SK-N-SH (cell line): ENCODE measurements at regions of chr1 and their contacts with region 1.

Region 1: GRCh38 chr1:225474986-225475820 is 47.4 kb upstream of the LBR start:
- DNase-seq: peak; percentile 93
- H3K4me3 ChIP-seq: peak overlapping the region; percentile 17 to 46; a peak in 2 of 4 replicates
- H3K27ac ChIP-seq: no peak overlapping the region
- H3K4me1 ChIP-seq: peaks cover 0 to 6% of the 10 kb centered on the region in 2 experiments; a peak in 2 of 4 replicates
- H3K27me3 ChIP-seq: no peaks in the 10 kb centered on the region
- CTCF ChIP-seq: peak; percentile 100
- EP300 ChIP-seq: no peak
- RAD21 ChIP-seq: peak; percentile 100

Region 2: GRCh38 chr1:225427235-225428067 is 47.8 kb before region 1 on chr1 and contains the start of gene LBR:
- CTCF ChIA-PET with region 1: interaction called, 13 read pairs
- POLR2A ChIA-PET with region 1: no interaction called
- DNase-seq: peak; percentile 85
- H3K4me3 ChIP-seq: peak within 1 kb of the TSS; percentile 74 to 89
- H3K27ac ChIP-seq: peak within 1 kb of the TSS; percentile 72 to 97
- H3K4me1 ChIP-seq: peaks cover 40 to 44% of the 10 kb centered on the region in 2 experiments; a peak in 3 of 4 replicates
- H3K27me3 ChIP-seq: no peaks in the 10 kb centered on the region
- CTCF ChIP-seq: no peak
- EP300 ChIP-seq: no peak
- RAD21 ChIP-seq: no peak
- polyA plus RNA-seq, gene LBR: 10.6 and 11.7 TPM in 2 replicates

Region 3: DNA sequence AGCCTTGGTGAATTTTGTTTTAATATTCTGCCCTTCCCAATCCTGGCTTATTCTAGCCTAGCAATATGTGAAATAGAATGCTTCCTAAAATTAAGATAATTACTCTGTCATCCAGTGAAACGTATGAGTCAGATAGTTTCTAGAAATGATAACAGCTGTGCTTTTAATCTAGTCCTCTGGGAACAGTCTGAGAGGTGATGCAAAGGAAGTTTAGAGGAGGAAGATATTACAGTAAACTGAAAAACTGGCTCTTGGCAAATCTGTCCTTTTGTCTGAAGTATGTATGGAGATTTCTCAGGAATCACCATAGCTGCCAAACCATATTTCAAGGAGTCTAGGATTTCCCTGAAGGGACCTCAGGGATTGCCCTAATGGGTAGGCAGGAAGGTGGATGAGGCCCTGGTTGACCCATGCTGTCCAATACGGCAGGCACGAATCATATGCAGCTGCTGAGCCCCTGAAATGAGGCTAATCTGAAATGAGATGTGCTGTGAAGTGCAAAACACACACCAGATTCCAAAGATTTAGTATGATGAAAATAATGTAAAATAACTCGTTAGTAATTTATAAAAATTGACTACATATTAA is 23.4 kb after region 1 on chr1:
- CTCF ChIA-PET with region 1: interaction called, 11 read pairs
- POLR2A ChIA-PET with region 1: no interaction called
- DNase-seq: no peak
- H3K4me3 ChIP-seq: no peak overlapping the region
- H3K27ac ChIP-seq: peak overlapping the region; percentile 17 to 67
- H3K4me1 ChIP-seq: peaks cover 3 to 8% of the 10 kb centered on the region in 2 experiments
- H3K27me3 ChIP-seq: no peaks in the 10 kb centered on the region
- CTCF ChIP-seq: no peak
- EP300 ChIP-seq: no peak
- RAD21 ChIP-seq: no peak

Region 4: DNA sequence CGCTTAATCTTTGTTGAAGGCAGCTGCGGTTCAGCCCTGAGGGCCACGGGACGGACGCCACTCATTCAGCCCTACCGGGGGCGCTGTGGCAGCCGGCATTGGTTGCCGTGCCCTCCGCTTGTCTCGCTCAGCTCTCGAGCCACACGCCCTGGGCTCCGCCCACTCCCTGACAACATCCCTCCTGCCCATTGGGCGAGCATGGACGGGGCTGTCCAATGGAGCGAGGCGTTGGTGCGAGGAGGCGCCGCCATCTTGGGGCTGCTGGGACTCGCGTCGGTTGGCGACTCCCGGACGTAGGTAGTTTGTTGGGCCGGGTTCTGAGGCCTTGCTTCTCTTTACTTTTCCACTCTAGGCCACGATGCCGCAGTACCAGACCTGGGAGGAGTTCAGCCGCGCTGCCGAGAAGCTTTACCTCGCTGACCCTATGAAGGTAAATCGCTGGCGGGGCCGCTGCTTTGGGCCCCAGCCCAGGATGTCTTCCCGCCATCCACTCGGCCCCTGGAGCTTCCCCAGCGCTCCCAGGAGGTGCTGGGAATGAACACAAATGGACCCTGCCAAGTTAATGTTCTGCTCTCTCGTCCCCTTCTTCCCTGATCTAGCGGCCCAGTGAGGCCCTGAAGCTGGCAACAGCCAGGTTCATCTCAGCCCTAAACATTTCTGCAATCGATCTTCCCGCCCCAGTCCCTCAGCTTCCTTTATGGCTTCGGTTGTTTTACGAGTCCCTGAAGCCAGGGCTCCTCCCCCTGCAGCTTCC is 302.6 kb after region 1 on chr1 and contains the start of gene SRP9:
- CTCF ChIA-PET with region 1: interaction called, 473 read pairs
- POLR2A ChIA-PET with region 1: interaction called, 4 read pairs
- DNase-seq: peak; percentile 95
- H3K4me3 ChIP-seq: peak within 1 kb of the TSS; percentile 81 to 88
- H3K27ac ChIP-seq: peak within 1 kb of the TSS; percentile 95 to 96
- H3K4me1 ChIP-seq: peaks cover 14 to 21% of the 10 kb centered on the region in 2 experiments
- H3K27me3 ChIP-seq: no peaks in the 10 kb centered on the region
- CTCF ChIP-seq: peak; percentile 90
- EP300 ChIP-seq: no peak
- RAD21 ChIP-seq: peak; percentile 66
- polyA plus RNA-seq, gene SRP9: 156 and 292 TPM in 2 replicates

Region 5: DNA sequence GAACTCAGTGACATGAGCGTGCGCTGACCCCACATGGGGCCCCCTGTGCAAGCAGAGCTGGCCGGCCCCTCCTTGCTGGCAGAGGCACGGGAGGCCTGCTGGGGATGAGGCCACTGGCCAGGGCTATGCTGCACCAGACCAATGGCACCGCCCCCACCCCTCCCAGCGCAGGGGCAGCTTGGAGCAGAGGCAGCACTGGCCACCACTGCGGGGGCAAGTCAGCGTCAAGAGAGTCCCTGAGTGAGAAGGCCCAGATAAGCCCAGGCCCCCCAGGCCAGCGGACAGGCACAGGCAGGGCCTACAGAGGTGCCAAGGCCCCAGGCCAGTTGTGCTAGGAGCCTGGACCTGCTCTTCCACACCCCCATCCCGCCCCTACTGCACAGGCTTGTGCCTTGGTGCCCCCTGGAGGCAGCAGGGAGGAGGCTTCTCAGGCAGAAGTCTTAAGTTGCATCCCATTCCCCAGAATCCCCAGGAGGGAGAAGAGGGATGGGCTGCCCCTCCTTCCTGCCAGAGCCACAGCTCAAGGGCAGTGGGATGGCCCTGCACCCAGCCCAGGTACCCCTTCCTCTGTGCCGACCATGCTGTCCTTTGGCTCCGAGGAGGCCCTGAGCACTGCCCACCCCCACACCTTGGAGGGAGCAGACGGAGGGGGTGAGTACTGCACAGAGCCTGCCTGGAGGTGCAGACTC is 370.5 kb after region 1 on chr1:
- CTCF ChIA-PET with region 1: interaction called, 22 read pairs
- POLR2A ChIA-PET with region 1: no interaction called
- DNase-seq: peak; percentile 85
- H3K4me3 ChIP-seq: no peak overlapping the region; a peak in 1 of 4 replicates
- H3K27ac ChIP-seq: no peak overlapping the region
- H3K4me1 ChIP-seq: peaks cover 0 to 11% of the 10 kb centered on the region in 2 experiments; a peak in 1 of 4 replicates
- H3K27me3 ChIP-seq: no peaks in the 10 kb centered on the region
- CTCF ChIP-seq: peak; percentile 70
- EP300 ChIP-seq: no peak
- RAD21 ChIP-seq: peak; percentile 77

Region 6: GRCh38 chr1:225937048-225937968 is 462.1 kb after region 1 on chr1:
- CTCF ChIA-PET with region 1: interaction called, 15 read pairs
- POLR2A ChIA-PET with region 1: no interaction called
- DNase-seq: no peak
- H3K4me3 ChIP-seq: no peak overlapping the region
- H3K27ac ChIP-seq: no peak overlapping the region
- H3K4me1 ChIP-seq: peaks cover 0 to 19% of the 10 kb centered on the region in 2 experiments; a peak in 1 of 4 replicates
- H3K27me3 ChIP-seq: no peaks in the 10 kb centered on the region
- CTCF ChIP-seq: no peak
- EP300 ChIP-seq: no peak
- RAD21 ChIP-seq: no peak

Region 7: DNA sequence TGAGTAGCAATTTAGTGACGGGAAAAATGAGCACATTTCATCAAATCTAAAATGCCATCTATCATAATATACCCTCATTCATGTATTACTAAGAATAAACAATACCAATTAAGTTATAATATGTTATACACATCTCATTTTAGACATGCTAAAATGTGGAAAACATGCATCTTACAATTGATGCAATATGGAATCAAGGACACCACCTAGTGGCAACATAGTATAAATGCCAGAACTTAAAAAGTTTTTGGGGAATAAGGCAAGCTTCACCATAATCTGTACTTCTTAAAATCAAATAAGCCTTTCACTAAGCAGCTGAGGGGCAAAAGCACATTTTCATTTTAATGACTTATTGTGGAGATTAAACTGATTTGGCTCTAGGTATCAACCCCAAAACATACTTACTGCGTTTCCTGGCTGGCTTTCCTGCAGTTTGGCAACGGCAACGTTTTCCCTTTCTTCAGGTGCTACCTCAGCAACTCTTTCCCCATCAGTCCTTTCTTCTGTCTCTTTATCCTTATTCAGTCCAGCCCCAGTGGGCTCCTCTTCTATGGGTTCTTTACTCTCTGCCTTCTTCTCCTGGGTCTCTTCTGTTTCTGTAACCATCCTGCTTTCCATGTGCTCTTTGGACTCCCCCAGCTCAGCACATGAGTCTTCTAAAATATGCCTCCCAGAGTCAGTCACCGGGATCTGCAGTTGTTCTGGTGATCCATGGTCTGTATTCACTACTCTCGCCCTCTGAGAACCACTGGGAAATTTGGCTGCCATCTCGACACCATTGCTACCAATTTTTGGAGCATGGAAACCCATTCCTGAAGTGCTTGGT is 512.5 kb after region 1 on chr1:
- CTCF ChIA-PET with region 1: interaction called, 82 read pairs
- POLR2A ChIA-PET with region 1: no interaction called
- DNase-seq: peak; percentile 45
- H3K4me3 ChIP-seq: no peak overlapping the region
- H3K27ac ChIP-seq: no peak overlapping the region
- H3K4me1 ChIP-seq: no peaks in the 10 kb centered on the region
- H3K27me3 ChIP-seq: no peaks in the 10 kb centered on the region
- CTCF ChIP-seq: peak; percentile 87
- EP300 ChIP-seq: no peak
- RAD21 ChIP-seq: peak; percentile 67

Region 8: GRCh38 chr1:226355669-226356551 is 880.7 kb after region 1 on chr1:
- CTCF ChIA-PET with region 1: no interaction called
- POLR2A ChIA-PET with region 1: no interaction called
- DNase-seq: peak; percentile 54
- H3K4me3 ChIP-seq: no peak overlapping the region
- H3K27ac ChIP-seq: peak overlapping the region in 1 of 2 experiments; percentile 58; a peak in 2 of 4 replicates
- H3K4me1 ChIP-seq: peaks cover 0 to 24% of the 10 kb centered on the region in 2 experiments; a peak in 1 of 4 replicates
- H3K27me3 ChIP-seq: no peaks in the 10 kb centered on the region
- CTCF ChIP-seq: no peak
- EP300 ChIP-seq: peak in 1 of 2 experiments; percentile 55; a peak in 2 of 4 replicates
- RAD21 ChIP-seq: peak; percentile 5; the same call in 1 of the 2 replicates